ENCODE measurements at regions of chr7 and their contacts with region 1.

Region 1: GRCh38 chr7:14170872-14171271 is 181.4 kb upstream of the ETV1 start:
- DNase-seq: peak in 1 of 2 experiments; percentile 48
- H3K4me3 ChIP-seq: no peak overlapping the region
- H3K27ac ChIP-seq: no peak overlapping the region
- H3K4me1 ChIP-seq: no peaks in the 10 kb centered on the region
- H3K27me3 ChIP-seq: no peaks in the 10 kb centered on the region
- CTCF ChIP-seq: no peak

Region 2: DNA sequence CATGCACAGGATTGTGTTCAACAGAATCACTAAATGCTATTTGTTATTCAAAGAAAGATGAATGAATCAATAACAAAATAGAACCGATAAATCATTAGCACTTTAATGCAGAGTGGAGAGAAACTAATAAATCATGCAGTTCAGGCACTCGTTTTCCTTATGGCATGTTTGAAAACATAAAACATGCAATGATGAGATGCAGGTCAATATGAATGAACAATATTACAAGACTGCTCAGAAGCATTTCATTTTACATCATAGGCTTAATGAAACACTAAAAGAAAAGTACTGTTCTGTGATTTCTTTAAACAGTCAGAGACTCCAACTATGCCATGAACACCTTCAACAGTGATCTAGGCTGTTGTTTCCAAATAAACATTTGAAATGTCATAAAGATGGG is 23.3 kb before region 1 on chr7:
- CTCF ChIA-PET with region 1: interaction called, 10 read pairs
- POLR2A ChIA-PET with region 1: no interaction called
- intact Hi-C with region 1: no loop called
- DNase-seq: no peak
- H3K4me3 ChIP-seq: no peak overlapping the region
- H3K27ac ChIP-seq: no peak overlapping the region
- H3K4me1 ChIP-seq: no peaks in the 10 kb centered on the region
- H3K27me3 ChIP-seq: no peaks in the 10 kb centered on the region
- CTCF ChIP-seq: no peak

Region 3: DNA sequence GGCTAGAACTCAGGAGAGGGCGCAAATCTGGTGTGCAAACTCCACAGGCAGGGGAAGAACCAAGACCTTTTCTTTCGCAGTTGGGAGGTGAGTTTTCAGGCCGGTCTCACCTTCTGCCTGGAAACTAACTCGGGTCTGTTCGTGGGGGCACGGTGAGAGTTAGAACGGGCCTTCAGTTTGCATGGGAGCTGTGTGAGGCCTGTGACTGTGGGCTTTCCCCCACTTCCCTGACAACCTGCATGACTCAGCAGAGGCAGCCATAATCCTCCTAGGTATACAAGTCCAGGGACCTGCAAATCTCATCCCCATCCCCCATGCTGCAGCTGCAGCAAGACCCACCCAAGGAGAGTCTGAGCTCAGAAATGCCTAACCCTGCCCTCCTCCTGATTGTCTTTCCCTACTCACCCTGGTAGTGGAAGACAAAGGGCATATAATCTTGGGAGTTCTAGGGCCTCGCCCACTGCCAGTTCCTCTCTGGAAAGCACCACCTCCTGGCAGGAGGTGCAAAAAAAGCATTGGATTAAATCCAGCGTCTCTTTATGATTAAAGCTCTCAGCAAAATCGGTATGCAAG is 13.5 kb after region 1 on chr7:
- CTCF ChIA-PET with region 1: no interaction called
- POLR2A ChIA-PET with region 1: interaction called, 3 read pairs
- intact Hi-C with region 1: loop called (anchors 1 kb)
- DNase-seq: peak; percentile 20 to 26
- H3K4me3 ChIP-seq: no peak overlapping the region
- H3K27ac ChIP-seq: no peak overlapping the region
- H3K4me1 ChIP-seq: no peaks in the 10 kb centered on the region
- H3K27me3 ChIP-seq: no peaks in the 10 kb centered on the region
- CTCF ChIP-seq: no peak

Measured in PC-9 (cell line).